Left cardiac atrium (tissue), 4 donors: ENCODE measurements at regions of chr9 and their contacts with region 1.

Region 1: GRCh38 chr9:75855509-75855908 is 35.0 kb upstream of the PCSK5 start:
- DNase-seq: no peak
- ATAC-seq: no peak

Region 2: GRCh38 chr9:75265525-75265972 is 590.0 kb before region 1 on chr9:
- intact Hi-C with region 1: loop called (anchors 5 to 10 kb)
- DNase-seq: no peak
- ATAC-seq: peak; percentile 68 to 76

Region 3: GRCh38 chr9:75333624-75334023 is 521.9 kb before region 1 on chr9:
- intact Hi-C with region 1: loop called in 1 of 2 experiments (anchors 10 kb)
- DNase-seq: no peak
- ATAC-seq: no peak

Region 4: DNA sequence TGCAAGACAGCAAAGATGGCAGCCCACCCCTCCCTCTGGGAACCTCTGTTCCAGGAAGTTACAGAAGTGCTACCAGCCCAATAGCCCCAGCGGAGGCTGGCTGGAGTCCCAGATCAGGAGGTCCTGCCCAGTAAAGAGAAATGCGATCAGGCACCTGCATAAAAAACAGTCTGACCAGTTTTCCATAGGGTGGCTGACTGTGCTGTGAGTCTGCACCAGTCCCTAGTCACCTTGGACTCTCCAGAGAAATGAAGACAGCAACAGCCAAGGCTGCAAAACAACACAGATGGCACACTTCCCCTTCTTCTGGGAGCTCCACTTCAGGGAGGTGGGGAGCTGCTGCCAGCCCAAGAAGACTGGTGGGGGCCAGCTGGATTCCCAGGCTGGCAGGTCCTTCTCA is 230.5 kb before region 1 on chr9:
- intact Hi-C with region 1: loop called (anchors 10 kb)
- DNase-seq: no peak
- ATAC-seq: no peak

Region 5: DNA sequence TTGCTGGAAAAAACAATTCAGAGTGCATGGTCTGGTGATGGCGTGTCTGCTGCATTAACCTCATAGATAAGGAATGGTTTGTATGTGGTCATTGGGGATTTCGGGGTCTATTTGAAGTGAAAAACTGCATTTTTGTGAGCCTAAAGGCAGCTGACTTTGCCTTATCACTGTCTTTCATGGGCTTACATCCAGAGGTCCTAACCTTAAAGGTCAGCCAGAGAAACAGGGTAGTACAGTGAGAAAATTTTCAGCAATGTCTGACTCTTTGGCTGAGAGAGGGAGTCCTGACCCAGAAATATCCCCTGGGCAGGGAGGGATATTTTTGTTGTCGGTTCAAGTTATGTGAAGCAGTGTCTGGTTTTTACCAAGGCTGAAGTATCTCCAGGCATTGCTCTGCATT is 40.7 kb after region 1 on chr9:
- intact Hi-C with region 1: no loop called
- DNase-seq: no peak
- ATAC-seq: peak; percentile 7 to 31